ENCODE measurements at regions of chr7 and their contacts with region 1.

Region 1: DNA sequence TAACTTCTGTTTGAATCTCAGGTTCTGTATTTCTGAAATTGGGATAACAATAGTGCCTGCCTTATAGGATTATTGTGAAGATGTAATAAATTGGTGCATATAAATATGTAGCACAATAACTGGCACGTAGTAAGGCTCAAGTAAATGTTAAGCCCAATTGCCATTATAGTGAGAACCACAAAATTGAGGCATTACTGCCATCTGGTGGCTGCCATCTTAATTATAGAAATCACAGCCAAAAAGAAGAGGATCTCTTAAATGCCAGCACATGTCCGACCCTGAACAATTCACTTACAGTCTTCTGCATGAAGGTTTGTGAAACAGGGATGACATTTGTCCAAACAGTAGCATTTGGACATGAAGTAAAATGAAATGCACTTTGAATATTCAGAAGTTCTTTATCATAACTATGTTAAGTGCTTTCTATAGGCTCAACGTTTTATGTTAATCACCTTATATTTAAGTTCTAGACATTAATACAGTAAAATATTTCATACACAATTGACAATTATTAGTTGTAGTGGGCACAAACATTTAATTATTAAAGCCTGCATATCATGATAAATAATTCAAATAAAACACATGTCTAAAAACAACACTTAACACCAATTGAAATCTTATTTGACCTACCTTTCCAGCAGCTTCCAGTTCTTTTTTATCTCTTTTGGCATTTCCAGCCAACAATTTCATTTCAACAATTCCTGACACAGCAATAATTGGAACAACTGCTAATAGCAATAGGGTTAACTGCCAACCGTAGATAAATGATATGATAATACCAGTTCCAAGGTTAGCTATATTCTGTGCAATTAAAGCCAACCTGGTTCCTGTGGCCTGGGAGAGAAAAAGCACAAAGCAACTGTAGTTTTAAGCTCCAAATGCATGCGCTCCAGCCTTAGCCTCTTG is 58.5 kb downstream of the ABCB4 start:
- DNase-seq: peak in 1 of 2 donors; percentile 14
- ATAC-seq: peak; percentile 24 to 70 (median 46)
- H3K4me3 ChIP-seq: no peak overlapping the region
- H3K27ac ChIP-seq: no peak overlapping the region
- H3K4me1 ChIP-seq: peaks cover 16% of the 10 kb centered on the region
- H3K27me3 ChIP-seq: no peaks in the 10 kb centered on the region
- CTCF ChIP-seq: peak; percentile 72

Region 2: GRCh38 chr7:87312215-87312865 is 104.6 kb before region 1 on chr7:
- intact Hi-C with region 1: loop called (anchors 1 kb)
- DNase-seq: peak in 1 of 2 donors; percentile 39
- ATAC-seq: peak; percentile 82 to 92 (median 91)
- H3K4me3 ChIP-seq: no peak overlapping the region
- H3K27ac ChIP-seq: no peak overlapping the region
- H3K4me1 ChIP-seq: no peaks in the 10 kb centered on the region
- H3K27me3 ChIP-seq: no peaks in the 10 kb centered on the region
- CTCF ChIP-seq: peak; percentile 99

Measured in psoas muscle (tissue), 8 donors.